ENCODE measurements at regions of chr17 and their contacts with region 1.

Region 1: GRCh38 chr17:56038131-56038530 is 115.1 kb upstream of the ANKFN1 start:
- DNase-seq: no peak
- ATAC-seq: no peak
- H3K4me3 ChIP-seq: no peak overlapping the region
- H3K27ac ChIP-seq: no peak overlapping the region
- H3K4me1 ChIP-seq: no peaks in the 10 kb centered on the region
- H3K27me3 ChIP-seq: no peaks in the 10 kb centered on the region
- CTCF ChIP-seq: no peak
- POLR2A ChIP-seq: no peak

Region 2: GRCh38 chr17:55911186-55911585 is 126.9 kb before region 1 on chr17:
- intact Hi-C with region 1: no loop called
- DNase-seq: no peak
- ATAC-seq: peak in 1 of 4 donors; percentile 38
- H3K4me3 ChIP-seq: no peak overlapping the region
- H3K27ac ChIP-seq: no peak overlapping the region
- H3K4me1 ChIP-seq: no peaks in the 10 kb centered on the region
- H3K27me3 ChIP-seq: no peaks in the 10 kb centered on the region
- CTCF ChIP-seq: no peak
- POLR2A ChIP-seq: no peak

Region 3: DNA sequence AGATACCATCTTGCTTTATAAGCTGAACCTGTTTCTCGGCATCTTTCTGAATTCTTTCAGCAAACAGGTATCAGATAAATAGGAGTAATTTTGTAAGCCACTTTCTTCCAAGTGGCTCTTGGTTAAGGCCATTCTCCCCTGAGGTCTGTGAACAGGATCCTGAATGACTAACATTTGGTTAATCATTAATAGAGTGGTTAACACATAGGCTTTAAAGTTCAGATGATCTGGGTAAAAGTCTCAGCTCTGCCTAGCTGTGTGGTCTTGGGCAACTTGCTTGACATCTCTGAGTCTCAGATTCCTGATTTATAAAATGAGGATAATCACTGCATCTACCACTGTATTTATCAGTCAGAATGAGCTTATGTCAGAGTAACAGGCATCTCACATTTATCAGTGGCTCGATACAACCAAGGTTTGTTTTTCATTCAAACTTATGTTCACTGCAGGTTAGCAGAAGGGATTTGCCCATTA is 70.7 kb after region 1 on chr17:
- intact Hi-C with region 1: loop called in 1 of 2 experiments (anchors 5 kb)
- DNase-seq: no peak
- ATAC-seq: peak; percentile 93 to 98 (median 98)
- H3K4me3 ChIP-seq: no peak overlapping the region
- H3K27ac ChIP-seq: no peak overlapping the region
- H3K4me1 ChIP-seq: peaks cover 0 to 15% (median 2%) of the 10 kb centered on the region in 4 donors
- H3K27me3 ChIP-seq: no peaks in the 10 kb centered on the region
- CTCF ChIP-seq: no peak
- POLR2A ChIP-seq: no peak

Region 4: GRCh38 chr17:56172517-56172982 is 134.4 kb after region 1 on chr17:
- intact Hi-C with region 1: no loop called
- DNase-seq: no peak
- ATAC-seq: no peak
- H3K4me3 ChIP-seq: no peak overlapping the region
- H3K27ac ChIP-seq: no peak overlapping the region
- H3K4me1 ChIP-seq: no peaks in the 10 kb centered on the region
- H3K27me3 ChIP-seq: no peaks in the 10 kb centered on the region
- CTCF ChIP-seq: no peak
- POLR2A ChIP-seq: no peak

Measured in right lobe of liver (tissue), 6 donors.